PC-3 (cell line): ENCODE measurements at regions of chr13 and their contacts with region 1.

Region 1: DNA sequence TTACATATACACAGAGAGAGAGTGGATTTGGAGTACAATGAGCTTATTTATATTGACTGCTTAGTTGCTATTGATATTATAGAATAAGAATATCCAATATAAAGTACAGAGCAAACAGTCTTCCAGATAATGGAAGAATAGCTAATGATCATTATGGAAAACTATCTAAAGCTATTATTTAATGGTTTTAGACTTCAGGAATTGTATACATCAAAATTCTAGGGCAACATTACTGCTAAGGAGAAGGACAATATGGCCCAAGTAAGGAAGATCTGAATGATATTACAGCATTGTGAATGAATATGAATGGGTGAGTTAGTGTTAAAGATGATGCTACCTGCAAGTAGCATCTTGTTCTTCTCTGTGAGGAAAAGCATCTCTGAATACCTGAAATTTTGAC is 604.2 kb upstream of the PCDH20 start:
- DNase-seq: no peak
- ATAC-seq: no peak
- H3K4me3 ChIP-seq: no peak overlapping the region
- H3K27ac ChIP-seq: no peak overlapping the region
- H3K4me1 ChIP-seq: 0 out of 2 replicates have a peak, but pooled peaks cover 3% of the 10 kb centered on the region
- H3K27me3 ChIP-seq: no peaks in the 10 kb centered on the region
- CTCF ChIP-seq: no peak

Region 2: DNA sequence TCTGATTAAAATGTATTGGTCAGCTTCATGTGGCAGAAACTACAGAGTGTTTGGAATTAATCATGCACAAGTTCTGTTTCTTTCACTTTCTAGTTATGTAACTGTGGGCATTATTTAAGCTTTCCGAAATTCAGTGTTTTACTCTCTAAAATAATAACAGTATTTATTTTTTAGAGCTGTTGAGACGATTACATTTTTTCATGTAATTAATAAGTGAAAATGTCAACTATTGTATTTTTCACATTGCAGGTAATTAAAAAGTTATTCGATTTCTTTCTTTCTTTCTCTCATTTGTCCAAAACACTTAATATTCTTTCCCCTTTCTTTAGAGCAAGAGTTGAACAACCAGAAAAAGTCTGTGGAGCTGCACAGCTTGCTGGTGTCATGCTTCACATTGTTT is 44.9 kb before region 1 on chr13:
- CTCF ChIA-PET with region 1: no interaction called
- POLR2A ChIA-PET with region 1: no interaction called
- intact Hi-C with region 1: no loop called
- DNase-seq: no peak
- ATAC-seq: no peak
- H3K4me3 ChIP-seq: no peak overlapping the region
- H3K27ac ChIP-seq: no peak overlapping the region
- H3K4me1 ChIP-seq: no peaks in the 10 kb centered on the region
- H3K27me3 ChIP-seq: no peaks in the 10 kb centered on the region
- CTCF ChIP-seq: no peak

Region 3: GRCh38 chr13:62043600-62043999 is 23.7 kb after region 1 on chr13:
- CTCF ChIA-PET with region 1: no interaction called
- POLR2A ChIA-PET with region 1: no interaction called
- intact Hi-C with region 1: loop called (anchors 2 kb)
- DNase-seq: no peak
- ATAC-seq: no peak
- H3K4me3 ChIP-seq: no peak overlapping the region
- H3K27ac ChIP-seq: no peak overlapping the region
- H3K4me1 ChIP-seq: no peaks in the 10 kb centered on the region
- H3K27me3 ChIP-seq: no peaks in the 10 kb centered on the region
- CTCF ChIP-seq: no peak